HepG2 (cell line): ENCODE measurements at regions of chr2 and their contacts with region 1.

Region 1: GRCh38 chr2:195937176-195937575 is 131.5 kb downstream of the DNAH7 start:
- DNase-seq: no peak
- ATAC-seq: no peak
- H3K4me3 ChIP-seq: no peak overlapping the region
- H3K27ac ChIP-seq: no peak overlapping the region
- H3K4me1 ChIP-seq: no peaks in the 10 kb centered on the region
- H3K27me3 ChIP-seq: no peaks in the 10 kb centered on the region
- CTCF ChIP-seq: no peak
- EP300 ChIP-seq: no peak
- POLR2A ChIP-seq: no peak
- RAD21 ChIP-seq: no peak

Region 2: DNA sequence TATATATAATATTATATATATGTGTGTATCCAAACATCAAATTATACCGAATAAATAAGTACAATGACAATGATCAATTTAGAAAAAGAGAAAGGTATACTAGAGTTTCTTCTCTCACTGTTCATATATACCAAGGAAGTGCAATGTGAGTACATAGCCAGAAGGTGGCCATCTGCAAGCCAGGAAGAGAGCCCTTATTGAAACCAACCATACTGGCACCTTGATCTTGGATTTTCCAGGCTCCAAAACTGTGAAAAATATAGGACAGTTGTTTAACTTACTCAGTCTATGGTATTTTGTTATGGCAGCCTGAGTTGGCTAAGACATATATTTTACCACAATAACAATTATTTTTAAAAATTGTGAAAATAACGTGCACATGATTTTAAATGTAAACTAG is 1770.4 kb before region 1 on chr2:
- CTCF ChIA-PET with region 1: no interaction called
- POLR2A ChIA-PET with region 1: no interaction called
- in situ Hi-C with region 1: no loop called
- intact Hi-C with region 1: loop called (anchors 5 kb)
- DNase-seq: peak; percentile 39
- ATAC-seq: peak; percentile 86
- H3K4me3 ChIP-seq: no peak overlapping the region
- H3K27ac ChIP-seq: no peak overlapping the region
- H3K4me1 ChIP-seq: no peaks in the 10 kb centered on the region
- H3K27me3 ChIP-seq: no peaks in the 10 kb centered on the region
- CTCF ChIP-seq: peak; percentile 65
- EP300 ChIP-seq: no peak
- POLR2A ChIP-seq: no peak
- RAD21 ChIP-seq: no peak

Region 3: GRCh38 chr2:194559964-194560363 is 1377.2 kb before region 1 on chr2:
- CTCF ChIA-PET with region 1: no interaction called
- POLR2A ChIA-PET with region 1: no interaction called
- in situ Hi-C with region 1: no loop called
- intact Hi-C with region 1: loop called (anchors 5 kb)
- DNase-seq: no peak
- ATAC-seq: no peak
- H3K4me3 ChIP-seq: no peak overlapping the region
- H3K27ac ChIP-seq: no peak overlapping the region
- H3K4me1 ChIP-seq: no peaks in the 10 kb centered on the region
- H3K27me3 ChIP-seq: no peaks in the 10 kb centered on the region
- CTCF ChIP-seq: no peak
- EP300 ChIP-seq: no peak
- POLR2A ChIP-seq: no peak
- RAD21 ChIP-seq: no peak

Region 4: DNA sequence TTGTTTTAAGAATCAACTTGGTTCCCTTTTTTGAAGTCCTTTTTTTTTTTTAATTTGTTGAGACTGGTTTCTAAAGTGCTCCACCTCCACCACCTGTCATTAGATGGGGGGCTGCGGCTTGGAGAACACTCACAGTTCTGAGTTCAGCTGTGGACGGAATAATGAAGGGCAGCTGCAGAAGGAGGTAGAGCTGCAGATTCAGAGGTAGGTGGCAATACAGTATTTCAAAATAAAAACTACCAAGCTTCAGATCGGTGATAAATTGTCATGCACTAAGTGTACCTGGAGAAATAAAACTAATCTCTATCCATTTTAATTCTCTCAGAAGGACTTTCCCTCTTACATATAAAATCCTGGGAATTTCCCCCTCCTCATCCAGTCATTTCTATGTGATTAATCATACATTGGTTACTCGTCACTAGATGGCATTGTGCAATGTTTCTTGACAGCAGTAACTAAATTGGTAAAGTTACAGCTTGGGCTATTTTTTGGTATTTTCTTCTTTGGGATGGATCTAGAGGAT is 361.2 kb before region 1 on chr2:
- CTCF ChIA-PET with region 1: no interaction called
- POLR2A ChIA-PET with region 1: no interaction called
- in situ Hi-C with region 1: no loop called
- intact Hi-C with region 1: loop called (anchors 5 kb)
- DNase-seq: peak; percentile 27
- ATAC-seq: no peak
- H3K4me3 ChIP-seq: no peak overlapping the region
- H3K27ac ChIP-seq: no peak overlapping the region
- H3K4me1 ChIP-seq: no peaks in the 10 kb centered on the region
- H3K27me3 ChIP-seq: no peaks in the 10 kb centered on the region
- CTCF ChIP-seq: peak; percentile 53
- EP300 ChIP-seq: no peak
- POLR2A ChIP-seq: no peak
- RAD21 ChIP-seq: no peak

Region 5: DNA sequence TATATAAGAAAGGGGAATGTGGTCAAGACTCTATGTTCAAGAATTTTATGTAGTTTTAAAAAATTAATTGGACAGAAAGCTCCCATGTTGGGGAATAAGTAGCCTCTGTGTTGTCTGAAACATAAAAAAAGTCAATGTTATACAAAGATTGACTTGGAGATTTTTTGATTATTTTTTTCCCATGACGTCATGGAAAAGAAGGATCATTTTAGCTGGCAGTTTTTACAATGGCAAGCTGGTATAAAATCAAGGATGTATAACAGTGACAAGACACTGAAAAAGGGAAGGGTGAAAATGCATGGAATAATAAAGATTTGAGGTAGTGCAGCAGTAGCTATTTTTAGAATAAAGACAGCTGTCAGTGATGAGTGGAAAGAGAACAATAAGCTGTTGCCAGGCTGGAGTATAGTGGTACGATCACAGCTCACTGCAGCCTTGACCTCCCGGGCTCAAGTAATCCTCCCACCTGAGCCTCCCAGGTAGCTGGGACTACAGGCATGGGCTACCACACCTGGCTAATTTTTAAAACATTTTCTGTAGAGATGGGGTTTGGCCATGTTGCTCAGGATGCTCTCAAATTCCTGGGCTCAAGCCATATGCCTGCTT is 271.0 kb before region 1 on chr2:
- CTCF ChIA-PET with region 1: no interaction called
- POLR2A ChIA-PET with region 1: no interaction called
- in situ Hi-C with region 1: no loop called
- intact Hi-C with region 1: loop called (anchors 5 kb)
- DNase-seq: no peak
- ATAC-seq: no peak
- H3K4me3 ChIP-seq: no peak overlapping the region
- H3K27ac ChIP-seq: no peak overlapping the region
- H3K4me1 ChIP-seq: no peaks in the 10 kb centered on the region
- H3K27me3 ChIP-seq: no peaks in the 10 kb centered on the region
- CTCF ChIP-seq: no peak
- EP300 ChIP-seq: no peak
- POLR2A ChIP-seq: no peak
- RAD21 ChIP-seq: no peak

Region 6: DNA sequence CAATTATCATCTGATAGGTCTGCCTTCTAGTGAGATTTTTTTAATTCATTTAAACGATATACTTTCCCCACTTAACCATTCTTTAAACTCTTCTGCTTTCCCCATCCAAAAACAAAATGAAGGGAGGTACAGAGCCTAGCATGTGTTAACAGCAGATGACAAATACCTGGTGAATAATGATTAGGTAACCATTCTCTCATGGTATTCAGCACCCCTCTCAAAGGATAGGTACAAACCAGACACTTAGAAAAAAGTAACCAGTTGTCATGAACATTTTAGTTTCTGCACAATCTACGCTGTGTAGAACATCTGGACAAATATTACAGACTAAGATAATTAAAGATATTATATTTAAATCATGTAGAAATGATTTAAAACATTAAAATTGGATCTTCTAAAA is 75.1 kb after region 1 on chr2:
- CTCF ChIA-PET with region 1: no interaction called
- POLR2A ChIA-PET with region 1: no interaction called
- in situ Hi-C with region 1: no loop called
- intact Hi-C with region 1: no loop called
- DNase-seq: no peak
- ATAC-seq: no peak
- H3K4me3 ChIP-seq: no peak overlapping the region
- H3K27ac ChIP-seq: no peak overlapping the region
- H3K4me1 ChIP-seq: no peaks in the 10 kb centered on the region
- H3K27me3 ChIP-seq: no peaks in the 10 kb centered on the region
- CTCF ChIP-seq: no peak
- EP300 ChIP-seq: no peak
- POLR2A ChIP-seq: no peak
- RAD21 ChIP-seq: no peak